ENCODE measurements at regions of chr2 and their contacts with region 1.

Region 1: DNA sequence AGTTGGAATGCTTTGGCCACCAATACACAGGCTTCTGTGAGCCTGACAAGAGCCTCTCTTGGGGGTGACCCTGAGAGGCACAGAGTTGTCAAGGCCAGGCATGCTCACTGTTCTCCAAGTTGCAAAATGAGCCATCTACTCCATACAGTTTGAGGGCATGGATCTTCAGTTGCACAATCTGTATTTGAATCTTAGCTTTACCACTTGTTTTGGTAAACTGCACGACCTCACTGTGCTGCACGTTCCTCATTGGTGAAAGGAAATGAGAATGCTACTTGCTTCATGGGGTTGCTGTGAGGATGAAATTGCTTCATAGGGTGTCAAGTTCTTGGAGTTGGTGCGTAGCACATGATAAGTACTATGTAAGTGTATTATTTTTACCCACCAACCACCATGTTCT is 12.0 kb upstream of the HAAO start:
- DNase-seq: peak; percentile 86 to 88 (median 88)
- H3K4me3 ChIP-seq: no peak overlapping the region
- H3K4me3 Mint-ChIP-seq: peak overlapping the region in 1 of 2 donors; percentile 18
- H3K27ac ChIP-seq: peak overlapping the region; percentile 83 to 90
- H3K27ac Mint-ChIP-seq: peak overlapping the region; percentile 92 to 99 (median 97)
- H3K4me1 ChIP-seq: peaks cover 39 to 53% of the 10 kb centered on the region in 2 donors
- H3K4me1 Mint-ChIP-seq: peaks cover 53% of the 10 kb centered on the region
- H3K27me3 ChIP-seq: no peaks in the 10 kb centered on the region
- H3K27me3 Mint-ChIP-seq: peaks cover 1 to 10% (median 5%) of the 10 kb centered on the region in 3 donors
- CTCF ChIP-seq: no peak

Region 2: DNA sequence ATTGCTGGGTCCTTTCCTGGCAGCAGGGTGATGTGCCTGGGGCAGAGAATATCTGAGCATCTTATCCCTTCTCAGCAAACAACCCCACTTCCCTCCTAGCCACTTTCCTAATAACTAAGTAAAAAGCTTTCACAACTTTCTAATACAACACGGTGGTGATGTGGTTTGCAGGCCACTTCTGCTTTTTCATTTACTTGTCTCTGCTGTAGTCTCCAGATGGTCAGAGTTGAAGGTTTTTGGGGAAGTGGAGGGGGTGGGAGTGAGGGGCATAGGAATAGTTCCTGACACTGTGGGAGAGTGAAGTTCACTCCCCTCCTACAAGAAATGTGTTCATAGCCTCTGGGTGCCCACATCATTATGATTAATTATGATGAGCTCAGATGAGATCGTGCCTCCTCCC is 52.0 kb before region 1 on chr2:
- intact Hi-C with region 1: loop called in 1 of 2 experiments (anchors 5 kb)
- DNase-seq: peak; percentile 94 to 97 (median 95)
- H3K4me3 ChIP-seq: peak overlapping the region in 1 of 3 experiments; percentile 41
- H3K4me3 Mint-ChIP-seq: peak overlapping the region; percentile 28 to 75
- H3K27ac ChIP-seq: peak overlapping the region; percentile 89 to 90
- H3K27ac Mint-ChIP-seq: peak overlapping the region; percentile 97 to 99 (median 98)
- H3K4me1 ChIP-seq: peaks cover 64 to 71% of the 10 kb centered on the region in 2 donors
- H3K4me1 Mint-ChIP-seq: peaks cover 69% of the 10 kb centered on the region
- H3K27me3 ChIP-seq: no peaks in the 10 kb centered on the region
- H3K27me3 Mint-ChIP-seq: no peaks in the 10 kb centered on the region
- CTCF ChIP-seq: no peak

Region 3: DNA sequence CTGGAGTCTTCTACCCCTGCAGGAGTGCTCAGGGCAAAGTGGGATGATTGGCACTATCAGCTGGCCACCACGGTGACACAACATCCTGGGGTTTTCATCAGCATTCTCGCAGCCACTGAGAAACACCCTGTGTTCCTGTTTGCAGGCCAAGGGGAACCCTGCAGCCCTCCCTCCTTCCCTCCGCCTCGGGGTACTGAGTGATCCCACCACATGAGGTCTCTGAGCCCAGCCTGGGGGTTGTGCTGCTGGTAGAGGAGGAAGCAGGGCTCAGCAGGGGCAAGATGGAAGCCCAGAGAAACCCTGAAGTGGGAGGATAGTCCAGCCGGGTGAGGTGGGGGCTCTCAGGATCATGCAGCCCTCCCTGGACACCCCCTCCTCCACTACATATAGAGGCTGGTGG is 40.2 kb before region 1 on chr2 and contains the start of gene OXER1:
- intact Hi-C with region 1: loop called (anchors 5 kb)
- DNase-seq: peak; percentile 73 to 83 (median 77)
- H3K4me3 ChIP-seq: peak within 1 kb of the TSS in 1 of 3 experiments; percentile 34
- H3K4me3 Mint-ChIP-seq: peak within 1 kb of the TSS; percentile 45 to 74
- H3K27ac ChIP-seq: peak within 1 kb of the TSS; percentile 47 to 73
- H3K27ac Mint-ChIP-seq: peak within 1 kb of the TSS; percentile 76 to 94 (median 84)
- H3K4me1 ChIP-seq: peaks cover 50 to 52% of the 10 kb centered on the region in 2 donors
- H3K4me1 Mint-ChIP-seq: peaks cover 50% of the 10 kb centered on the region
- H3K27me3 ChIP-seq: no peaks in the 10 kb centered on the region
- H3K27me3 Mint-ChIP-seq: peaks cover 0 to 5% (median 3%) of the 10 kb centered on the region in 3 donors
- CTCF ChIP-seq: no peak
- polyA plus RNA-seq, gene OXER1: 3.8 to 13.3 (median 5.7) TPM

Region 4: DNA sequence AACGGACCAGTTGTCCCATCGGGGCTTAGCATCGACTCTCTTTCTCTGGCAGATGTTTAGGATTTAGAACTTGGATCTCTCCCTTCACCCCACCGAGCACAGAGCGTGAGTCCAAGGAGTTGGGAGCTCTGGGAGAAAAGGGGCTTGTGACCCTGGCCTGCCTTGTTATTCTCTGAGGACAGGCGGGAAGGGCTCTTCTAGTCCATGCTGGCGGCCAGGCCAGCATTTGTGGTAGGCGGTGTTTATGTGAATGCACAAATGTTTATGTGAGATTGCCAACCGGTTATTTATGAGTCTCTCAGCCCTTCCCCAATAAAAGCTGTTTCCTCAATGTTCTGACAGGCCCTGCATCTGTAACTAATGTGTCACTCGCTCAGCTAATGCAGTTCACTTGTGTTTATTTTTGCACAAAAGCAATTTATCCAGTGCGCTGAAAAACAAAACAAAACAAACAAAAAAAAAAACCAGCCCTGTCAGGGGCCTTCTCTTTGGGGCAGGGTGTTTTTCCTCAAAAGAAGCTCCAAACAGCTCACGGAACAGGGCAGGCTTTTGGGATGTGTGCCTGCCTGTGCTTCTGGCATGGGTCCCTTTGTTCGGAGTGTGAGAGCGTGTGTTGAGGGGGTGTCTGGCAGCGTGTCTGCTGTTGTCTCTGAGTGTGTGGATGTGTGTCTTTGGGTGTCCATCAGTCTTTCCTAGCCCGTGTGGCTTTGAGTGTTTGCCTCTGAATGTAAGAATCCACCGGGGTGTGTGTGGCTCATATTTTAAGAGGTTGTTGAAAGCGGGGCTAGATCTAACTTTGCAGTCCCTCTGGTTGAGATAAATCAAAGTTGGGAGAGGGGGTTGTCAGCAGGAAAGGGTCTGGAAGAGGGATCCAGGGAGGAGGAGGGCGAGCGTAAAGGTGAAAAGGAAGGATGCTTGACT is 40.8 kb after region 1 on chr2:
- intact Hi-C with region 1: no loop called
- DNase-seq: no peak
- H3K4me3 ChIP-seq: no peak overlapping the region
- H3K4me3 Mint-ChIP-seq: no peak overlapping the region
- H3K27ac ChIP-seq: no peak overlapping the region
- H3K27ac Mint-ChIP-seq: no peak overlapping the region
- H3K4me1 ChIP-seq: no peaks in the 10 kb centered on the region
- H3K4me1 Mint-ChIP-seq: peaks cover 3% of the 10 kb centered on the region
- H3K27me3 ChIP-seq: no peaks in the 10 kb centered on the region
- H3K27me3 Mint-ChIP-seq: peaks cover 2 to 5% (median 3%) of the 10 kb centered on the region in 3 donors
- CTCF ChIP-seq: no peak